IMR-90 (cell line): ENCODE measurements at regions of chr13 and their contacts with region 1.

Region 1: DNA sequence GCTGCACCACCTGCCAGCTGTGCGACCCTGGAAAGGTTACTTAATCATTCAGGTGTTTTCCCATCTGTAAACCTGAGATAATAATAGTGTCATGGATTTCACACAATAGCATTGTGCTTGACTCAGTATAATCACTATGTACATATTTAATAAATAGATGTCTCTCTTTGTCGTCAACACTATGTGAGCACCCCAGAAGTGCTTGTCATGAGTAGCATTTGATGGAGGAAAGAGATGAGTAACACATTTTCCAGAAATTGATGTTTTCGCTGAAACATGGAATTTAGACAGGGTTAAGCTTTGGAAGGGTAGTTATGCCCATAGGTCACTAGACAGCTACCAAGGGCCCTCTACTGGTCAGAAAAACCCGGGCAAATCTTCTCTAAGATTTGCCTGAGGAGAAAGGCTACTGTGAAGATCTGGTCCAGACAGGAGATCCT is 9.5 kb upstream of the MBNL2 start:
- DNase-seq: peak; percentile 49
- ATAC-seq: peak; percentile 91
- H3K4me3 ChIP-seq: no peak overlapping the region
- H3K27ac ChIP-seq: no peak overlapping the region
- H3K4me1 ChIP-seq: peaks cover 7% of the 10 kb centered on the region
- H3K27me3 ChIP-seq: no peaks in the 10 kb centered on the region
- CTCF ChIP-seq: peak; percentile 71
- POLR2A ChIP-seq: no peak
- RAD21 ChIP-seq: peak; percentile 73

Region 2: DNA sequence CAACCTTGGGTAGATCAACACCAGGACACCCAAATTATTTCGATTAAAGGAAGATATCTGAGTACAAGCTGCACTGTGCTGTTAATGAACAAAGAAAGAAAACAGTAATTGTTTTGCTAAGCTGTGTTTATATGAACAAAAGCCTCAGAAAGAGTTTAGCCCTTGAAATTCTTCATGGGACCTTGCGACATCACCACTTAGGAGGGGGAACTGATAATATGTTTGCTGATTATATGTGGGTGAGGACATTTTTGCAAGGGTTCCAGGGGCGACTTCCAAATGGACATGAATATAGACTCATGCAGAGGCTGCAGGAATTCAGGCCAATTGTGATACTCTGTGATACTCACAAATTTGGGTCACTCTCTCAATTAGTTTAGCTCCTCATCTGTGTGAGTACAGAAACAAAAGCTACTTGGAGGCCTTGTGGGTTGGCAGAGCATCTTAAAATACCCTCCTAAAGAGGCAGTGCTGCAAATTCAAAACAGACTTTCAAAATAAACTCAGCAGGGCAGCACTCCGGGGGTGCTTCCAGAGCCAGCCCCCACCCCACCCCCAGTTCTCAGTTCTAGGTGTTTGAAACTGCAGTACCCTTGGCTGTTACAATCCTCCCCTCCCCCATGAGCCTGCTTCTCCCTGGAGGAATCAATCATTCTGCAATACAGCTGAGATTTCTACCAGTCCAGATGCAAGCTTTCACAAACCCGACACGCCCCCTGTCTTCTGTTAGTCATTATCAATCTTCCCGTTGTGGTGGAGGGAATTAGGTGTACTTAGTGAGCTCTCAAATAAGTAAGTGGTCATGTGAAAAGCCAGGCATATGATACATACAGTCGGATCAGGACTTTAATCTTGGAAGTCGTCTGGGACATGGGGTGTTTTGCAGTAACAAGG is 87.5 kb before region 1 on chr13:
- CTCF ChIA-PET with region 1: interaction called, 3 read pairs
- POLR2A ChIA-PET with region 1: no interaction called
- dilution Hi-C with region 1: no loop called
- in situ Hi-C with region 1: loop called (anchors 5 kb)
- intact Hi-C with region 1: no loop called
- DNase-seq: peak; percentile 74
- ATAC-seq: peak; percentile 24
- H3K4me3 ChIP-seq: no peak overlapping the region
- H3K27ac ChIP-seq: peak overlapping the region; percentile 69; the same call in 1 of the 2 replicates
- H3K4me1 ChIP-seq: peaks cover 28% of the 10 kb centered on the region
- H3K27me3 ChIP-seq: no peaks in the 10 kb centered on the region
- CTCF ChIP-seq: no peak
- POLR2A ChIP-seq: no peak
- RAD21 ChIP-seq: no peak